Naive thymus-derived CD4-positive, alpha-beta T cell (primary cell): ENCODE measurements at regions of chrX and their contacts with region 1.

Region 1: GRCh38 chrX:130079824-130080406 is 30.4 kb downstream of the ELF4 start:
- DNase-seq: peak in 8 of 9 donors; percentile 13 to 66 (median 52)
- ATAC-seq: no peak
- H3K4me3 ChIP-seq: no peak overlapping the region
- H3K4me3 Mint-ChIP-seq: peak overlapping the region in 7 of 10 donors; percentile 14 to 64 (median 47)
- H3K27ac ChIP-seq: peak overlapping the region; percentile 41
- H3K27ac Mint-ChIP-seq: peak overlapping the region; percentile 66 to 92 (median 85)
- H3K4me1 ChIP-seq: peaks cover 26 to 30% of the 10 kb centered on the region in 2 donors
- H3K4me1 Mint-ChIP-seq: peaks cover 19 to 46% (median 42%) of the 10 kb centered on the region in 7 donors
- H3K27me3 ChIP-seq: no peaks in the 10 kb centered on the region
- H3K27me3 Mint-ChIP-seq: no peaks in the 10 kb centered on the region

Region 2: DNA sequence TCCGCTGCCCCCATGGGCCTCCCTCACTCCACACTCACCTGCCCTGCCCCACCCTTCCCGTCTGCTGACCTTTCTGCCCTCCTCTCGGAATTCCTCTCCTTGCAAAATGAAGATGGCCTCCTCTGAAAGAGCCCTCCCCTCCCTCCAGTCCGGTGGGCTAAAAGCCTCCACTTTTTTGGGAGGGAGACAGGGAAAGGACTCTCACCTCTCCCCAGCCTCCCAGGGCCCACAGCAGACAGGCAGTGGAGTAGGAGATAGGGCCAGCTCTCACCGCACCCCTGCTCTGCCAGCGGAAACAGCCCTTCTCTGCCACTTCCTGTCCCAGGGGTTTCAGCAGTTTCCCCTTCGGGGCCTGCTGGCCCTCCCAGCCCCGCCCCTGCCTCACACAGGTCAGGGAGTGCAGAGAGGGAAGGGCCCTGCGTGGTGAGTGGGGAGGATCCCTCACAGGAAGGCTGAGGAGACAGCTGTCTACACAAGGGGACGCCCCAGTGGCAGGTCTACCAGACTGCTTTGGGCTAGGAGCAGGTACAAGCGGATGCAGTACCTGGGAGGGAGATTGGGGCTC is 12.1 kb after region 1 on chrX:
- CTCF ChIA-PET with region 1: interaction called, 9 read pairs
- POLR2A ChIA-PET with region 1: interaction called, 44 read pairs
- intact Hi-C with region 1: loop called (anchors 1 kb)
- DNase-seq: peak; percentile 46 to 91 (median 87)
- ATAC-seq: peak; percentile 98
- H3K4me3 ChIP-seq: peak overlapping the region; percentile 64
- H3K4me3 Mint-ChIP-seq: peak overlapping the region; percentile 74 to 92 (median 86)
- H3K27ac ChIP-seq: peak overlapping the region; percentile 68
- H3K27ac Mint-ChIP-seq: peak overlapping the region; percentile 89 to 97 (median 95)
- H3K4me1 ChIP-seq: peaks cover 44% of the 10 kb centered on the region in 2 donors
- H3K4me1 Mint-ChIP-seq: peaks cover 13 to 84% (median 52%) of the 10 kb centered on the region in 7 donors
- H3K27me3 ChIP-seq: no peaks in the 10 kb centered on the region
- H3K27me3 Mint-ChIP-seq: no peaks in the 10 kb centered on the region

Region 3: DNA sequence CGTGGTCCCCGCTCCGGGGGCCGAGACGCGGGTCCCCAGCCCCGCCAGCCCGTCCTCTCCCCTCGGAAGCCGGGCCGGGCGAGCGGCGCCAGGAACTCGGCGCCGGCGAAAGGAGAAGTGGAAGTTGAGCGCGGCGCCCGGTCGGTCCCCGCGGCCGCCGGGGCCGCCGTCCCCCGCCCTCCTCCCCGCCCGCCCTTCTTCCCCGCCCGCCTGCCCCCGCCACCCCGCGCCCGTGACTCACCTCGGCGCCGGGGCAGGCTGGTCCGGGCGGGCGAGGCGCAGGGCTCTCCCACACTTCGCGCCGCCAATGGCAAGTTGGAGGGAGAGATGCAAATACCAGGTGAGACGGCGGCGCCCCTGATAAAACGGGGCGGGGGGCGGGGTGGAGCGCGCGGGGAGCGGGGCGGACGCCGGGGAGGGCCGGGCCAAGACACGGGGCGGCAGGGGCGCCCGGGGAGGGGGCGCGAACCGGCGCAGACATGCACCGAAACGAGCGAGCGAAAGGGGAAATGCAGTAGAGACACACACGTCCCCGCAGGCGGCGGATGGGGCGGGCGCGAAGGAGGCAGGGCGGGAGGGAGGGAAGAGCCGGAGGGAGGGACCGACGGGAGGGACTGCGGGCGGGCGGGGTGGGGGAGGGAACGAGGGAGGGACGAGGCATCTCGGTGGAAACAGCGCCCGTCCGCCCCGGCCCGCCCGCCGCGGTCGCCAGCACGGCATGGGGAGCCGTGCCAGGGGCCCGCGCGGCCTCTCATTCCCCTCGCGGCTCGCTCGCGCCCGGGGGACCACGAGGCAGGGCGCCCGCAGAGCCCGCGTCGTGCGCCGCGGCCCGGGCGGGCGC is 30.7 kb after region 1 on chrX and contains the start of gene ELF4:
- CTCF ChIA-PET with region 1: interaction called, 4 read pairs
- POLR2A ChIA-PET with region 1: interaction called, 10 read pairs
- intact Hi-C with region 1: loop called (anchors 1 kb)
- DNase-seq: peak in 7 of 9 donors; percentile 25 to 60 (median 34)
- ATAC-seq: peak; percentile 78
- H3K4me3 ChIP-seq: peak within 1 kb of the TSS; percentile 57
- H3K4me3 Mint-ChIP-seq: peak within 1 kb of the TSS; percentile 79 to 96 (median 90)
- H3K27ac ChIP-seq: peak within 1 kb of the TSS; percentile 77
- H3K27ac Mint-ChIP-seq: peak within 1 kb of the TSS; percentile 41 to 89 (median 75)
- H3K4me1 ChIP-seq: peaks cover 5% of the 10 kb centered on the region in 2 donors
- H3K4me1 Mint-ChIP-seq: peaks cover 10 to 36% (median 31%) of the 10 kb centered on the region in 7 donors
- H3K27me3 ChIP-seq: no peaks in the 10 kb centered on the region
- H3K27me3 Mint-ChIP-seq: no peaks in the 10 kb centered on the region
- total RNA-seq, gene ELF4: 20.7 to 48.9 (median 23.7) TPM

Region 4: GRCh38 chrX:130186651-130187050 is 106.7 kb after region 1 on chrX:
- CTCF ChIA-PET with region 1: interaction called, 18 read pairs
- POLR2A ChIA-PET with region 1: interaction called, 6 read pairs
- intact Hi-C with region 1: no loop called
- DNase-seq: no peak
- ATAC-seq: no peak
- H3K4me3 ChIP-seq: no peak overlapping the region
- H3K4me3 Mint-ChIP-seq: no peak overlapping the region
- H3K27ac ChIP-seq: no peak overlapping the region
- H3K27ac Mint-ChIP-seq: peak overlapping the region in 1 of 9 donors; percentile 43
- H3K4me1 ChIP-seq: peaks cover 6 to 13% of the 10 kb centered on the region in 2 donors
- H3K4me1 Mint-ChIP-seq: peaks cover 3 to 26% (median 13%) of the 10 kb centered on the region in 7 donors
- H3K27me3 ChIP-seq: no peaks in the 10 kb centered on the region
- H3K27me3 Mint-ChIP-seq: no peaks in the 10 kb centered on the region

Region 5: DNA sequence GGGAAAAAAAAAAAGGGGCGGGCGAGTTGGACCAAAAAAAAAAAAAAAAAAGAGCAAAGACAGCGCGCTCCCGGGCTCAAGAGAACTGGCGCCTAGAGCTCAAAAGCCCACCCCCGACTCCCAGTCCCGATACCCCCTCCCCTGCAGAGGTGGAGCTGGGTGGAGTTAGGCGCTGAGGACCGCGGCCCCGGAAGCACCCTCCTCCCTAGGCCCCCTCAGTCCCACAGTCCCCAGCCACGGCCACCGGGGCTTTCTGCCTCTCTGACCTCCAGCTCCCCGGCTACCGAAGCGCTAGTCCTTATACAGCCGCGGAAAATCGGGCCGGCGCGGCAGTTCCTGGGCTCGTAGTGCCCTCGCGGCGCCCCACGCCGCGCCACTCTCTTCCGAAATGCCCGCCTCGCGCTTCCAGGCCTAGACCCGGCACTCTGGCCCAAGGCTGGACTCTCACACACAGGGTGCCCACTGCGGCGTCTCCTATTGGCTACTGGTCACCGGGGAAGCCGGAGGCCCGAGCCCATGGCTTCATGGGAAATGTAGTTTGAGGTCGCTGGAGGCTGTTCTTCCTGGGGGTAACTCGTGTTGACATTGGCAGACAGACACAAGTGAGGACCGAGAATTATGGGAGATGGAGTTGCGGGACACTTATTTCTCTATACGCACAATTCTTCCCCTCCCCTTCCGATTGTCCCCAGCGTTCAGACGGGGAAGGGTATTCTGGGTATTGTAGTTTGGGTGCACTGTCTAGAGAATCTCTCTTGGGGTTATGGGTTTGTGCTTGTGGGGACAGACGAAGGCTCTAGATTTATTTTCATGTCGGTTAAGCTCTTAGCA is 823.1 kb after region 1 on chrX and contains the start of gene ENOX2:
- CTCF ChIA-PET with region 1: no interaction called
- POLR2A ChIA-PET with region 1: no interaction called
- intact Hi-C with region 1: loop called (anchors 1 to 5 kb)
- DNase-seq: peak; percentile 51 to 90 (median 83)
- ATAC-seq: peak; percentile 98
- H3K4me3 ChIP-seq: peak within 1 kb of the TSS; percentile 79
- H3K4me3 Mint-ChIP-seq: no peak within 1 kb of the TSS
- H3K27ac ChIP-seq: peak within 1 kb of the TSS; percentile 93
- H3K27ac Mint-ChIP-seq: peak within 1 kb of the TSS in 6 of 9 donors; percentile 51 to 91 (median 71)
- H3K4me1 ChIP-seq: peaks cover 0 to 5% of the 10 kb centered on the region in 2 donors
- H3K4me1 Mint-ChIP-seq: peaks cover 5 to 14% (median 12%) of the 10 kb centered on the region in 7 donors
- H3K27me3 ChIP-seq: no peaks in the 10 kb centered on the region
- H3K27me3 Mint-ChIP-seq: no peaks in the 10 kb centered on the region
- total RNA-seq, gene ENOX2: 10.3 to 15.3 (median 12.1) TPM